Calu3 (cell line): ENCODE measurements at regions of chr5 and their contacts with region 1.

Region 1: DNA sequence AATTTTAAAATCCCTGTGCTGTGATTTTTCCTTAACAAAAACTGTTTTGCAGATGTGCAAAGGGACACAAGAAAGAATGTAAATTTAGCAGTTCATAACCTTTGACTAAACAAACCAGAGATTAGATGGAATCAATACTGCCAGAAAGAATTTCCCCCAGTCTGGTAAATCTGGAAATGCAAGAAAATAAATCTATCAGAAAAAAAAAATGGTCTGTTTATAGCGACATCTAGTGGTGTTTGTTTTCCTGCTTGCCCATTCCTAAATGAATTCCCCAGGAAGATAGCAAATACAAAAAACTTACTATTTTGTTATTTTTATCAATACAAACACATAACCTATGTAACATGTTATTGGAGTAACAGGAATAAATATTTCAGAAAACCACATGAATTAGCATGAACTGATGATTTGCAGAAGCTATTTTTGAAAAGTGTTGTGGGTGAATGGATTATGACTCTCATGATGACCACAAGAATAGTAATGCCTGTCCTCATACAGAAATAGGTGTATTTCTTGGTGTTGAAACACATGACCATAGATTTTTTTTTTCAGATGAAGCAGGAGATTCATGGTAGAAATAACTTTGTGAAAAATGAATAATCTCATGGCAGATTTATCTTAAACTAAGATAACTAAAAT is 1703.8 kb downstream of the MAT2B start:
- DNase-seq: peak; percentile 6
- H3K4me3 Mint-ChIP-seq: no peak overlapping the region
- H3K27ac Mint-ChIP-seq: no peak overlapping the region
- H3K4me1 Mint-ChIP-seq: peaks cover 8% of the 10 kb centered on the region
- H3K27me3 Mint-ChIP-seq: no peaks in the 10 kb centered on the region
- CTCF ChIP-seq: peak; percentile 56

Region 2: DNA sequence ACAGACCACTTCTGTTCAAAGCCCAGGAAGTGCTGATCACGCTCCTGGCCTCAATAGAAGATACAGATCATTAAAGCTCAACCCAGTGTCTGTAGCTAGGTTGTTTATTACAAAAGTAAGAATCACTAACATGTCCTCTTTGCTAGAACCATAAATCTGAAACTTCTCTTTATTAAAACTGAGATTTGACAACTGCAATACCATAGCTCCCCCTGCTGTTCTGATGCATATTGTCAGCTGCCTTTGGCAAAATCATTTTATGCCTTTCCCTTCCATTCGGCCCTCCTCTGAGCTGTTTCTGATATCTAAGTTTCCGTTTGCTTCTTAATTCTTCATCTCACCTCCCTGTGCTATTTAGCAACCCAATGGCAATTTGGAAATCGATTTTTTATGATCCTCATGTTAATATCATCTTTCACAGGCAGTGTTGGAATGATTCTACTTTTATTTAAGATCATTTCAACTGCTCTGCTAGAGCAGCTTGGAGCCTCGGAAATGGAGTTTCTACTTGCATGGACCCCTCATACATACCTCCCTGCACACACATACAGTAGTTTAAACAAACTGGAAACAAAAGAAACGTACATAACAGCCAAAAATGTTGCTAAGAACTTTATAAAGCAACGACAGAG is 705.0 kb before region 1 on chr5:
- CTCF ChIA-PET with region 1: no interaction called
- intact Hi-C with region 1: loop called (anchors 1 kb)
- DNase-seq: peak; percentile 68
- H3K4me3 Mint-ChIP-seq: peak overlapping the region; percentile 3
- H3K27ac Mint-ChIP-seq: no peak overlapping the region
- H3K4me1 Mint-ChIP-seq: peaks cover 9% of the 10 kb centered on the region
- H3K27me3 Mint-ChIP-seq: no peaks in the 10 kb centered on the region
- CTCF ChIP-seq: peak; percentile 77

Region 3: DNA sequence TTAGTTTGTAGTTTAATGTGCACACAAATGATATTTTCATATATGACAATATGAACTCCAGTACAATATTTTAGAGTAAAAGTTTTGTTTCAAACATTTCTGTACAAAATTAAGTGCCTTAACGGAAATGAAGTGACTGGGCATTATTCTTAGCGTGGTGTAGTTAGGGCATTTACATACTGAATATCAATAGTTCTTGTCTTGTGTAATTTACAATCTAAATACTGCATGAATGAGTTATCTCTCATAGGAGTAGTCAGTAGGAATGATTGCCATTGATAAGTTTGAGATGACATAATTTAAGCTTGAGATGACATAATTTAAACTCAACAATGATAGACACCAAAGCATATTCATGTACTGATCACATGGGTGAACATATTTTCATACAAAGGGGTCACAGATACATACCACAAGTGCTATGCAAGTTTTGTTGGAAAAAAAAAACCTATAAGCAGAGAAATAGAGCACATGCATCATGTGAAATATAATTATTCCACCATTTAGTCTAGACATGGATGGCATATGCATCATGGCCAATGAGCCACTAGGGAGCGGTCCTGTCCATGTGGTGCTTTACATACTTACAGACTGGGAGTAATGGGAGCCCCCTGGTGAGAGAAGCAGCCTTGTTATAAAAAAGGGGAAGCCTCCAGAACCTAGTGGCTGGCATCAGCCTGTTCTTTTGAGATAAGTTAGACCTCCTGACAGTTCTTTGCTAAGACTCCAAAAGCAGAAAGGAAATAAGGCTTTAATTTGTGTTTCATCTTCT is 179.9 kb before region 1 on chr5:
- CTCF ChIA-PET with region 1: interaction called, 3 read pairs
- intact Hi-C with region 1: loop called (anchors 1 kb)
- DNase-seq: peak; percentile 42
- H3K4me3 Mint-ChIP-seq: no peak overlapping the region
- H3K27ac Mint-ChIP-seq: no peak overlapping the region
- H3K4me1 Mint-ChIP-seq: no peaks in the 10 kb centered on the region
- H3K27me3 Mint-ChIP-seq: no peaks in the 10 kb centered on the region
- CTCF ChIP-seq: no peak